ENCODE measurements at regions of chr22 and their contacts with region 1.

Region 1: GRCh38 chr22:43230971-43231723 is 44.2 kb upstream of the TTLL12 start:
- DNase-seq: peak; percentile 66 to 92
- H3K4me3 ChIP-seq: peak overlapping the region in 3 of 4 experiments; percentile 40 to 54 (median 52); a peak in 6 of 8 replicates
- H3K27ac ChIP-seq: no peak overlapping the region
- H3K4me1 ChIP-seq: peaks cover 0 to 19% (median 13%) of the 10 kb centered on the region in 4 experiments; a peak in 6 of 7 replicates
- H3K27me3 ChIP-seq: no peaks in the 10 kb centered on the region
- CTCF ChIP-seq: peak; percentile 88 to 94 (median 89)
- EP300 ChIP-seq: no peak
- POLR2A ChIP-seq: no peak
- RAD21 ChIP-seq: peak; percentile 84 to 88

Region 2: GRCh38 chr22:43168416-43169309 is 62.5 kb before region 1 on chr22:
- CTCF ChIA-PET with region 1: interaction called, 17 read pairs
- POLR2A ChIA-PET with region 1: interaction called, 3 read pairs
- DNase-seq: no peak
- H3K4me3 ChIP-seq: no peak overlapping the region
- H3K27ac ChIP-seq: no peak overlapping the region; the same call in 1 of the 2 replicates
- H3K4me1 ChIP-seq: no peaks in the 10 kb centered on the region
- H3K27me3 ChIP-seq: no peaks in the 10 kb centered on the region
- CTCF ChIP-seq: no peak
- EP300 ChIP-seq: no peak
- POLR2A ChIP-seq: no peak
- RAD21 ChIP-seq: no peak

Region 3: DNA sequence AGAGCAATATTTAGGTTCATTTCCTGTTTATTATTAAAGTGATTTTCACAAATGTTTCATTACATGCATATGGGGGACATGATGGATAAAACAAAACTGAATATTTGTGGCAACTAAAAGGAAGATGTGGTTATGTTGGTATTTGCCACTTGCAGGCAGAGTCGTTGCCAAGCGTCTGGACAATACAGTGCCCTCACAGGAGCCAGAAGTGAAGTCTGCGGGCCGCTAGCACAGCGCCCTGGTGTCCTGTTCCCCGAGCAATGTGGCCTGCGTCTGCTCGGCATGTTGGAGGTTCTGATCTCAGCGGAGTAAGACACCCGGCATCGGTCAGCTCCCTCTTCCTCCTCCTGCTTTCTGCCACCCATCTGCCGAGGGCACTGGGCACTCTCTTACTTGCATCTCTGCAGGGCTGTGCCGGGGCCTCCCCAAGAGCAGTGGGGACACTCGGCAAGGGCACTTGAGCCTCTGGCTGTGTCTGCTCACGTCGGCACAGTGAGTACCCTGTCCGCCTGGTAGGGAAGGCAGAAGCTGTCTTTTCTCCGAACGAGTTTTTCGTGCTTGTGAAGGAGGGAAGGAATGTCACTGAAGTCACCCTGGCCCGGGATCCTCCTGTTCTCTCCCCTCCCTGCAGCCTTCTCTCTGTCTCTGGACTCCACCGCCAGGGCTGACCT is 33.7 kb before region 1 on chr22:
- CTCF ChIA-PET with region 1: interaction called, 17 read pairs
- POLR2A ChIA-PET with region 1: no interaction called
- DNase-seq: no peak
- H3K4me3 ChIP-seq: no peak overlapping the region
- H3K27ac ChIP-seq: no peak overlapping the region
- H3K4me1 ChIP-seq: no peaks in the 10 kb centered on the region
- H3K27me3 ChIP-seq: no peaks in the 10 kb centered on the region
- CTCF ChIP-seq: no peak
- EP300 ChIP-seq: no peak
- POLR2A ChIP-seq: no peak
- RAD21 ChIP-seq: no peak

Region 4: DNA sequence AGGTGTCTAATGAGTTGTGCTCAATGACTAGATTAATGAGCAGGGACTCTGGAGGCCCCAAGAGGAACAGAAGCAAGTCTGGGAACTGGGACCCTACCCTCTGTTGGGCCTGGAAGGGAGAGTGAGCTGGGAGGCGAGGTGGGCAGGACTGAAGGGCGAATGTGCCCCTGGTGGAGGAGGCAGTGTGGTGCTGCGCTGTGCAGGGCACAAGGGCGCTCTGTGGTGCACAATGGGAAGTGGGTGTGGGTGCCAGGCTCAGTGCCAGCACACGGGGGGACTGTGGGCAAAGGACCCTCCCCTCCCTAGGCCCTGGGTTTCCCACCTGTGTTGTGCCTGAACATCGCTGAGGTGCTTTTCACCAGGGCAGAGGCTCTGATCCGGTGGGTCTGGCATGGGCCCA is 13.3 kb after region 1 on chr22:
- CTCF ChIA-PET with region 1: interaction called, 71 read pairs
- POLR2A ChIA-PET with region 1: interaction called, 4 read pairs
- DNase-seq: no peak
- H3K4me3 ChIP-seq: no peak overlapping the region
- H3K27ac ChIP-seq: no peak overlapping the region
- H3K4me1 ChIP-seq: no peaks in the 10 kb centered on the region; a peak in 1 of 7 replicates
- H3K27me3 ChIP-seq: no peaks in the 10 kb centered on the region
- CTCF ChIP-seq: peak in 2 of 3 experiments; percentile 30 to 53; a peak in 2 of 4 replicates
- EP300 ChIP-seq: no peak
- POLR2A ChIP-seq: no peak
- RAD21 ChIP-seq: no peak

Region 5: DNA sequence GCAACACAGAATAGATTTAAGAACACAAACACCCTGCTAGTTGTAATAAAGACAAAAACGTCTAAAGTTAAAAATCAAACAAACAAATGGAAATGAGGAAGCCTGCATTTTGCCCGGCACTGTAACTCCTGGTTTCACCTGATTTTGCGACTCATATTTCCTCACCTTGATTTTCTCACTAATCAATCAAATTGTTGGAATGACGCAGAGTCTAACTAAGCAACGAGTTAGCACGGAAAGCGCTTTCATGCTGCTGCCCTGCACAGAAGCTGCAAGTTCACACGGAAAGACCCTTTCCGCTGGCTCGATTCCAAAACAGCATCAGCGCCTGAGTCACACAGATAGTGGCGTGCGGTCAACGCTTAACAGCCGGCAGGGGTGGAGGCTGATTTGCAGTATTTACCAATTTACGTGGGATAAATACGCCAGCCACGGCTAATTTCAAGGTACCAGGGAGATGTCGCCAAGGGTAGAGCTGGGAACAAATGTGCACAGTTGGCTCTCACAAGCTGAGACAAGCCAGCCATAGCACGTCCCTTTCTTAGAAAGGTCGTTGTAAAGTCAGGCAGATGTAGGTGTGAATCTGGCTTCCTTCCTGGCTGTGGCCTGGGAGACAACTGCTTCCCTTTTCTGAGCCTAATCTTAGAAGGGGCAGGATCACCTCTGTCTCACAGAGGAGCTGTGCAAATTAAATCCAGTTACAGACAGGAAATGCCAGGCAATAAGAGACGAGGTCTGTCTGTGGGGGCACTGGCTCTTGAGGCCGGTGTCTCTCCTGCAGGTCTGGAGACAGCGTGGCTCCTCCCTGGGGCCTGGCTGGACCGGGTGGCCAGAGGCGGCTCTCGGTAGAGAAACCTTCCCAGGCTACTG is 32.7 kb after region 1 on chr22:
- CTCF ChIA-PET with region 1: interaction called, 388 read pairs
- POLR2A ChIA-PET with region 1: interaction called, 3 read pairs
- DNase-seq: no peak
- H3K4me3 ChIP-seq: no peak overlapping the region
- H3K27ac ChIP-seq: no peak overlapping the region
- H3K4me1 ChIP-seq: peaks cover 0 to 2% (median under 1%) of the 10 kb centered on the region in 4 experiments; a peak in 2 of 7 replicates
- H3K27me3 ChIP-seq: no peaks in the 10 kb centered on the region
- CTCF ChIP-seq: no peak
- EP300 ChIP-seq: no peak
- POLR2A ChIP-seq: no peak
- RAD21 ChIP-seq: no peak

Measured in H1 (cell line).